ENCODE measurements at regions of chr14 and their contacts with region 1.

Region 1: GRCh38 chr14:53613404-53614253 is 343.0 kb downstream of the BMP4 start:
- DNase-seq: peak; percentile 98
- ATAC-seq: peak; percentile 92
- H3K4me3 ChIP-seq: peak overlapping the region; percentile 42
- H3K27ac ChIP-seq: peak overlapping the region; percentile 74
- H3K4me1 ChIP-seq: peaks cover 15% of the 10 kb centered on the region; the same call in 1 of the 2 replicates
- H3K27me3 ChIP-seq: no peaks in the 10 kb centered on the region
- CTCF ChIP-seq: no peak
- EP300 ChIP-seq: peak; percentile 98 to 99
- POLR2A ChIP-seq: peak; percentile 54; the same call in 1 of the 2 replicates
- RAD21 ChIP-seq: 0 out of 2 replicates have a peak, but pooled peaks have one; percentile 18

Region 2: DNA sequence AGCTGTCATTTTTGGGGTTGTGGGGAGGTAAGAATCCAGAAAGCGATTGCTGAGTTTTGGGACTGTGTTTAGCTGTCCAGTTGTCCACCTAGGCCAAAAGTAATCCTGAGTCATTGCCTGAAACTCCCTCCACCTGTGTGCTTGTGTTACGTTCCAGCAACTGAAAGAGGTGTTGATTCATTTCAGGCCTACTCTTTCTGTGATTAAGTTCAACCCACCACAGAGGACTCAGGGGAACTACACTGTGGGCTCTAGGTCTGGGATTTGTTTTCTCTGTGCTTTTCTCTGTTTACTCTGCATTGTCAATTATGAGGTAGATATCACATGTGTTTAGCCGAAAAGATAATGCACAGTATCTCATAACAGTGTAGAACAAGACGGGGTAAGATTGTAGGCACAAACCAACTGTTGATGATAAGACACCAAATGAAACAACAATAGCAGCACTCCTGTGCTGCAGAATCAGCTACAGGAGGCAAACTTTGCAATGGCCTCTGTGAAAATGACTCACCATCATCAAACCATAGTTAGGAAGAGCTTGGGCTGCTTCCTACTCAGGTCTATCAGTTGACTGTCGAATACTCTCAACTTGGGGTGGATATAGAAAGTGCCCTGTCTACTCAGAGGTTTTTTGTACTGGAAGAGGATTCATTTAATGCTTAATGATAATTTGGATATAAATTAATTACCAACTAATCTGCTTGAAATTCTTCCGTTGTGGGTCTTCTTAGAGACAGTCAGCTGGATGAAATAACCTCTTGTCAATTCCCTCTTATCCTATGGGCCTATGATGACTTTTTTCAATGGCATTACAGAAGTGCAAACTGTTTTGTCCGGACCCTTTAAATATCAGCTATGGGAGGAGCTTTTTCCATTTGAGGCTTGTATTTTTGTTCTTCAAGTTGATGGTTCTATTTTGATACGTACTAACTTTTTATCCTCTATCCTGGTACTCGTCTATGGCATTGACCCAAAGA is 42.9 kb before region 1 on chr14:
- CTCF ChIA-PET with region 1: interaction called, 6 read pairs
- POLR2A ChIA-PET with region 1: interaction called, 4 read pairs
- RAD21 ChIA-PET with region 1: interaction called, 25 read pairs
- SMC1A ChIA-PET with region 1: interaction called, 30 read pairs
- in situ Hi-C with region 1: no loop called
- intact Hi-C with region 1: loop called (anchors 1 kb)
- DNase-seq: peak; percentile 69
- ATAC-seq: peak; percentile 94
- H3K4me3 ChIP-seq: no peak overlapping the region
- H3K27ac ChIP-seq: peak overlapping the region; percentile 73
- H3K4me1 ChIP-seq: peaks cover 26% of the 10 kb centered on the region
- H3K27me3 ChIP-seq: no peaks in the 10 kb centered on the region
- CTCF ChIP-seq: no peak
- EP300 ChIP-seq: peak; percentile 84 to 89; a peak in 3 of 4 replicates
- POLR2A ChIP-seq: no peak
- RAD21 ChIP-seq: no peak

Region 3: DNA sequence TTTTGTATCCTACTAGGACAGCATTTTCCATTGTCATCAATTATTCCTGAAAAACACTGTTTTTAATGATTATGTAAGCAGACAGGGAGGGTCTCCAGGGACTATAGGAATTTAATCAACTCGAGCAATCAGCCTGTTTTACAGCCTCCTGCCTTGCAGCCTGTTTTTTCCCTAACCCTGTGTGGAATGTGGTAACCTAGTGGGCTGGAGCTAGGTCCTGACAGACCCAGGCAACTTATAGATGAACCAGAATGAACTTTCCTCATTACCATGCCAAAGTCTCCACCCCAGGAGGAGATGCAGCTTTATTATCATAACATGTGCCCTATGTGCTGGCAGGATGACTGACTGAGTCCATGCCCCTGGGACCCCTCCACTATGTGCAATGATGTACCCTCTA is 32.1 kb before region 1 on chr14:
- CTCF ChIA-PET with region 1: no interaction called
- POLR2A ChIA-PET with region 1: no interaction called
- RAD21 ChIA-PET with region 1: no interaction called
- SMC1A ChIA-PET with region 1: no interaction called
- in situ Hi-C with region 1: no loop called
- intact Hi-C with region 1: no loop called
- DNase-seq: no peak
- ATAC-seq: no peak
- H3K4me3 ChIP-seq: no peak overlapping the region
- H3K27ac ChIP-seq: no peak overlapping the region
- H3K4me1 ChIP-seq: no peaks in the 10 kb centered on the region
- H3K27me3 ChIP-seq: no peaks in the 10 kb centered on the region; a peak in 1 of 4 replicates
- CTCF ChIP-seq: no peak
- EP300 ChIP-seq: no peak
- POLR2A ChIP-seq: no peak
- RAD21 ChIP-seq: no peak

Region 4: DNA sequence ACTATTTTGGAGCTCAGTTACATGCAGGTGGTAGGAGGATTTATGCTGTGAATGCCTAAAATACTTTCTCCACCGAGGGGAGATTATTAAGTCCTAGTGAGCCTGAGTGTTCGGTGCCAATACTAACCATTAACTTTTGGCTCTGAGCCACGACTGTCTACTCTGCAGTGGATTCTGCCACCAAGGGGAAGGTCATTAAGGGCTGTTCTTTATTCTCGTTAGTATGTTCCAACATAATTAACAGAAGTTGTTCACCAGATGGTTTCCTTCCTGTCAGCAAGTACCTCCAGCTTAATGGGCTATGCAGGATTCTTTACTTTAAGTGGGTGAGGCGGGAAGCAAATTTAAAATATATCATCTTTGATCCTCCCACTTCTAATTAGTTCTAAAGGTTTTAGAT is 16.7 kb after region 1 on chr14:
- CTCF ChIA-PET with region 1: interaction called, 5 read pairs
- POLR2A ChIA-PET with region 1: interaction called, 3 read pairs
- RAD21 ChIA-PET with region 1: interaction called, 16 read pairs
- SMC1A ChIA-PET with region 1: interaction called, 29 read pairs
- in situ Hi-C with region 1: no loop called
- intact Hi-C with region 1: no loop called
- DNase-seq: no peak
- ATAC-seq: peak; percentile 31
- H3K4me3 ChIP-seq: no peak overlapping the region
- H3K27ac ChIP-seq: no peak overlapping the region
- H3K4me1 ChIP-seq: no peaks in the 10 kb centered on the region
- H3K27me3 ChIP-seq: no peaks in the 10 kb centered on the region
- CTCF ChIP-seq: no peak
- EP300 ChIP-seq: no peak
- POLR2A ChIP-seq: no peak
- RAD21 ChIP-seq: no peak

Region 5: DNA sequence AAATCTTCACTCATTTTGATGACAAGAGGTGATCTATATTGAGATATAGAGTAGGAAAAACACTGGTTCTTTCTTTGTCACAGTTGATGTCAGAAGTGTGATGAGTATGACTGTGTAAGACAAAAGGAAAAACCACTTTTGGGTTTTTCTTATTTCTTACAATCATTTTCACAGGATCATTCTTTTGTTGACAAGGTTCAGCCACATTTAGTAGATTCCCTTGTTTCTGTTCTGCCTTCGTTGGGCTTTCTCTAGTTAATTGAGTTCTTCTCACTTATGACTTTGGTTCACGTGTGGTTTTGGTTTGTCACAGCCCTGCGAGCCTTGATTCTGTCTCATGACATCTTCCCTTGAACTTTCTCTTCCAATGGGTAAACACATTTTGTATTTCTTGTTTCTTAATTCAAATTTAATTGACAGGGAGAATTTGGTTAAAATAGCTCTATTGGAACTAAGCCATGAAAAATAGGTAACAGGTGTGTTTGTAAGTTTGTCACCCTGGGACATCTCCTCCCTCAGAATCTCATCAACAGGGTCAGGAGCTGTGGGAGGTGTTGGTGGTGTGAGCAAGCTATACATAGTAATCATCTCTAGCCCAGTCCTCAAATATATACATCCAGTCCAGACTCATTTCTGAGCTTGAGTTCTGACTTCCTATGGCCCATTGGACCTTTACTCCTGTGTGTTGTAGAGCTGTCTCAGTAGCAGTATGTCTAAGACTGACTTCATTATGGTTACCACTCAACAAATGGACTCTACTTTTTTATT is 87.7 kb after region 1 on chr14:
- CTCF ChIA-PET with region 1: interaction called, 14 read pairs
- POLR2A ChIA-PET with region 1: interaction called, 7 read pairs
- RAD21 ChIA-PET with region 1: interaction called, 11 read pairs
- SMC1A ChIA-PET with region 1: interaction called, 44 read pairs
- in situ Hi-C with region 1: no loop called
- intact Hi-C with region 1: loop called (anchors 2 kb)
- DNase-seq: peak; percentile 40
- ATAC-seq: peak; percentile 85
- H3K4me3 ChIP-seq: no peak overlapping the region
- H3K27ac ChIP-seq: peak overlapping the region; percentile 37
- H3K4me1 ChIP-seq: peaks cover 13% of the 10 kb centered on the region
- H3K27me3 ChIP-seq: no peaks in the 10 kb centered on the region
- CTCF ChIP-seq: no peak
- EP300 ChIP-seq: peak; percentile 77 to 84; a peak in 2 of 4 replicates
- POLR2A ChIP-seq: no peak
- RAD21 ChIP-seq: 0 out of 2 replicates have a peak, but pooled peaks have one; percentile 4